Right ventricle myocardium inferior (tissue), 1 donor: ENCODE measurements at regions of chr13 and their contacts with region 1.

Region 1: GRCh38 chr13:42969558-42970172 is 22.4 kb downstream of the EPSTI1 start:
- DNase-seq: peak; percentile 85
- ATAC-seq: peak; percentile 88

Region 2: DNA sequence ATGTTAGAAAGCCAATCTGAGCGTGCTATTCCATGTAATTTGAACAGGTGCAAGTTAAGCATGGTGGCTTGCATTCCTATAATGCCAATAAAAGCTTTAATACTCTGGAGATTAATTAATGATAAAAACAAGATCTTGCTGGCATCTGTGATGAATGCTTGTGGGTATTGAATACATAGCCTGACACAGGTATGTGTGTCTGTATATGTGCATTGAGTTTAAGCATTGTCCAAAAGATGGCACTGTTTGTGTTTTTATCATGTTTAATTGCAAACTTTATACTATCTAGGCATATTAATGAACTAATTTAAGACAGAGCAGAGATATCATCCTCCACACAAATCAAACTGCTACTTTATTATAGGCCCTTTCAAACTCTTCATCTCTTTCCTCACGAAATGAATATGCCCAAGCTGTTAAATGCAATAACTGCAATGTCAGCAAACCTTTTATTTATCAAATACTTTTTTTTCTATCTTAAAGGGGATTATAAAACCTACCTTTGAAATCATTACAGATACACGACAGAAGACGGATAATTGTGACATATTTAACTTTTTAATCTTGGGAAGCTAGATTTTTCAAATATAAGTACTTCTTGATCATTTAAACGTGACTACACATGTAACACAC is 309.2 kb before region 1 on chr13:
- intact Hi-C with region 1: loop called (anchors 10 kb)
- DNase-seq: no peak
- ATAC-seq: no peak

Region 3: DNA sequence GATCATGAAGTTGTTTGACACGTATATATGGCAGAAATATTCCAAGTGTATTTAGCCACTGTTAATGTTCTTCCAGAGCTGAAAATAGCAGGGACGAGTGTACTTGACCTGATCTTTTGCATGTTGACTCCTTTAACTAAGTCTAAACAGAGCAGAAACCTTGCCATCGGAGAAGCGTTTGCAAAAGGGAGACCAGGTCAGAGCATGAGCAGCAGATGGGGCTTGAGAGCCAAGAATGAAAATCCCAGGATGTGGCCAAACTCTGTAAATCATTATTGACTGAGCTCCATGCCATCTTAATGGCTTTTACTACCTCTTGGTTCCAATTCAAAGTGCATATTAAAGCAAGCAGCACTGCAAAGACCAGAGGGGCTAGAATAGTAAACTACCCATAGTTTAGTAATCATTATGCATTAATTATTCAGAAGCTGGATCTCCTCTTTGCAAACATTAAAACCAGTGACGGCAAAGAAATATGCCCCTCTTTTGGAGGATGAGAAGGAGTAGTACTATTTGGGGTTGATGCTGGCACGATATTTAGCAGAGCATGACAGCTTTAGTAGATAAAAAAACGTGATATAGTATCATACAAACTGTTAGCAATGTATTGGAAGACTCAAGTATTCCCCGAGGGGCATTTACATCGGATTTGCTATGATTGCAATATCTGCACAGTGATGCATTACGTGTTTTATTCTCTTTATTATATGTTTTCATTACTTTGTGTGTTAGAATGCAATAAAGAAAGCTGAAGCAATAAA is 132.6 kb before region 1 on chr13:
- intact Hi-C with region 1: no loop called
- DNase-seq: no peak
- ATAC-seq: peak; percentile 16

Region 4: DNA sequence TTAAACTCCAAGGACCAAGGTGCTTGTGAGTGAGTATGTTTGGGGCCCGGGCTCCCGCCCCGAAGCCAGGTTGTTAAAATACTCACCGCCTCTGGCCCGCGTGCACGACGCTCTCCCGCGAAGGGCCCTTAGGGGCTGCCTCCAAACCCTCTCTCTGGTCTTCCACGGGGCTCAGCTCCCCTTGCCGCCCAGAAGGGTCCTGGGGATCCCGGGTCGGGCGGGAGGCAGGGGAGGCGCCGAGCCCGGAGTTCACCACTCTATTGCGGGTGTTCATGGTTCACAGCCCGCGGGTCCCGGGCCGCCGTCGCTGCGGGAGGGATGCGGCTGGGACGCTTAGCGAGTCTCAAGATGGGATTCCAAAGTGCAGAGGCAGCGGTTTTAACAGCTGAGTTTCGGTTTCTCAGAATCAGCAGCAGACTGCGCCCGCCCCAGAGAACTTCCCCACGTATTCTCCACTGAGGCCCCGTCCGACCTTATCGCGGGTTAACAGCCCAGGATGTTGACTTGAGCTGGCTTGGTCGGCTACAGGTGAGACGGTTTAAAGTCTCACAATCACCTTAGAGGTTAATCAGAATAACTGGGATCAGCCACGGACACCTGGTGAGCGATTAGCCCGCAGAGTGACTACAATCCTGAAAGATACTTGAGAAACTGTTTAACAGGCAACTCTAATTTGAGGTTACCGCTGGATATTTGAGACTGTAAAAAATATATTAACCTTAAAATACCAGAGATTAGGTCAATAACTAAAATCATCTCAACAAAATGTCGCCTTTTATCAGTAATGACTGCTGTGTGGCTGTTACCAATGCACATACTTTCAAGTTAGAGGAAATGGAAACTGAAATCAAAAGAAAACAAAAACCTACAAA is 22.5 kb after region 1 on chr13 and contains the start of gene EPSTI1:
- intact Hi-C with region 1: no loop called
- DNase-seq: peak; percentile 85
- ATAC-seq: peak; percentile 84
- total RNA-seq, gene EPSTI1: 3.8 TPM

Region 5: GRCh38 chr13:43023289-43023951 is 53.8 kb after region 1 on chr13 and contains the start of gene DNAJC15:
- intact Hi-C with region 1: loop called (anchors 5 kb)
- DNase-seq: peak; percentile 92
- ATAC-seq: peak; percentile 96
- total RNA-seq, gene DNAJC15: 35.6 TPM

Region 6: GRCh38 chr13:43878892-43879754 is 909.5 kb after region 1 on chr13 and contains the start of gene CCDC122:
- intact Hi-C with region 1: loop called (anchors 2 kb)
- DNase-seq: peak; percentile 96
- ATAC-seq: peak; percentile 91
- total RNA-seq, gene CCDC122: 2.6 TPM